ENCODE measurements at regions of chr4 and their contacts with region 1.

Region 1: GRCh38 chr4:80462621-80463091 is 127.1 kb downstream of the CFAP299 start:
- DNase-seq: peak in 5 of 9 donors; percentile 11 to 39 (median 21)
- ATAC-seq: no peak
- H3K4me3 ChIP-seq: peak overlapping the region; percentile 50
- H3K4me3 Mint-ChIP-seq: peak overlapping the region; percentile 22 to 88 (median 82)
- H3K27ac ChIP-seq: peak overlapping the region; percentile 29
- H3K27ac Mint-ChIP-seq: peak overlapping the region; percentile 65 to 93 (median 84)
- H3K4me1 ChIP-seq: peaks cover 0 to 12% of the 10 kb centered on the region in 2 donors
- H3K4me1 Mint-ChIP-seq: peaks cover 6 to 58% (median 40%) of the 10 kb centered on the region in 7 donors
- H3K27me3 ChIP-seq: no peaks in the 10 kb centered on the region
- H3K27me3 Mint-ChIP-seq: no peaks in the 10 kb centered on the region

Region 2: DNA sequence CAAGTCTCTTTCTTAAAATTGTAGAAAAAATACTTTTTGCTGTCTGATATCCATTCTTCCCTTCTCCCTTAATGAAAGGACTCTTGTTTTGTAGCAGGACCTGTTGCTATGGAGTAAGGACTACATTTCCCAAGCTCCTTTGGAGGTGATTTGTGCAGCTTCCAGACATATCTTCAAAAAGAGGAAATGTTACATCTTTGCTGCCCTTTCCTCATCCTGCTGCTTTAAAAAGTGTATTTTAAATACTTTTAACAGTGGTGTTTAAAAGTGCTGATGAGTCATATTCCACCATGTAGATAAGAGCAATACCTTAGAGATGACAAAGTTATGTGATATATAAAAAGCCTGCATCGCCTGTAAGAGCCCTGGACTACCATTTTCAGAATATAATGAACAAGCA is 28.4 kb before region 1 on chr4:
- CTCF ChIA-PET with region 1: interaction called, 3 read pairs
- POLR2A ChIA-PET with region 1: interaction called, 5 read pairs
- intact Hi-C with region 1: loop called in 1 of 2 experiments (anchors 2 kb)
- DNase-seq: no peak
- ATAC-seq: no peak
- H3K4me3 ChIP-seq: no peak overlapping the region
- H3K4me3 Mint-ChIP-seq: no peak overlapping the region
- H3K27ac ChIP-seq: no peak overlapping the region
- H3K27ac Mint-ChIP-seq: peak overlapping the region in 1 of 9 donors; percentile 34
- H3K4me1 ChIP-seq: peaks cover 3 to 13% of the 10 kb centered on the region in 2 donors
- H3K4me1 Mint-ChIP-seq: peaks cover 3 to 42% (median 31%) of the 10 kb centered on the region in 7 donors
- H3K27me3 ChIP-seq: no peaks in the 10 kb centered on the region
- H3K27me3 Mint-ChIP-seq: peaks cover 0 to 2% (median 0%) of the 10 kb centered on the region in 5 donors

Region 3: GRCh38 chr4:80492761-80493160 is 30.1 kb after region 1 on chr4:
- CTCF ChIA-PET with region 1: interaction called, 3 read pairs
- POLR2A ChIA-PET with region 1: interaction called, 3 read pairs
- intact Hi-C with region 1: loop called in 1 of 2 experiments (anchors 1 kb)
- DNase-seq: peak in 7 of 9 donors; percentile 61 to 89 (median 83)
- ATAC-seq: peak; percentile 98
- H3K4me3 ChIP-seq: no peak overlapping the region
- H3K4me3 Mint-ChIP-seq: peak overlapping the region; percentile 53 to 87 (median 67)
- H3K27ac ChIP-seq: peak overlapping the region; percentile 25
- H3K27ac Mint-ChIP-seq: peak overlapping the region; percentile 92 to 99 (median 97)
- H3K4me1 ChIP-seq: peaks cover 36 to 43% of the 10 kb centered on the region in 2 donors
- H3K4me1 Mint-ChIP-seq: peaks cover 28 to 74% (median 69%) of the 10 kb centered on the region in 7 donors
- H3K27me3 ChIP-seq: no peaks in the 10 kb centered on the region
- H3K27me3 Mint-ChIP-seq: no peaks in the 10 kb centered on the region

Region 4: GRCh38 chr4:80610845-80611677 is 148.4 kb after region 1 on chr4:
- CTCF ChIA-PET with region 1: no interaction called
- POLR2A ChIA-PET with region 1: no interaction called
- intact Hi-C with region 1: loop called in 1 of 2 experiments (anchors 5 kb)
- DNase-seq: no peak
- ATAC-seq: no peak
- H3K4me3 ChIP-seq: no peak overlapping the region
- H3K4me3 Mint-ChIP-seq: no peak overlapping the region
- H3K27ac ChIP-seq: no peak overlapping the region
- H3K27ac Mint-ChIP-seq: no peak overlapping the region
- H3K4me1 ChIP-seq: no peaks in the 10 kb centered on the region
- H3K4me1 Mint-ChIP-seq: peaks cover 0 to 27% (median 14%) of the 10 kb centered on the region in 7 donors
- H3K27me3 ChIP-seq: no peaks in the 10 kb centered on the region
- H3K27me3 Mint-ChIP-seq: peaks cover 0 to 5% (median 0%) of the 10 kb centered on the region in 5 donors

Region 5: DNA sequence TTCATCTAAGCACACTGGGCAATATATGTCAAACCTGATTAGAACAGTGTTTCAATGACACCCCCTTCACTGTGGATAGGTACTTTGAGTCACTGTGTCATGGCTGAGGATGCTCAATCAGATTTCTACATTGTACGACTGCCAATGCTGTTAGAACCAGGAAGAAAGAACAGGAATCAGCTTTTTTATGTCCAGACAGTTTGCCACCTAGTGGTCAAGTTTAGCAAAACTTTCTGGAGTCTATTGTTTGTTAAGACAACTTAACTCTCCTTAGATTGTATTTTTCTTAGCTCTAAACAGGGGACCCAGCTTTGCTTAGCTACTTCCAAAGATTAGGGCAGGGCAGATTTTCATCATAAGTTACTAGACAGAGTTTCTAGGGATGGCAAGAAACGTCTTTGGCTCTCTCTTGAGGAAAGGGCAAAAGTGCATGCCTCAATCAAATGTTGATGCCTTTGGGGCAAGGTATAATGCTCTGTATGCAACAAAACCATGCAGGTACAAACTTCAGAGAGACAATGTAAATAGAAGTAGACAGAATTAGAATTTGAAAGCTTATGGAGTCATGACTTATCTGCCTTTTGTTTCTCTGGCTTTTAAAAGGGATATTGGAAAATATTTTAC is 527.4 kb after region 1 on chr4:
- CTCF ChIA-PET with region 1: interaction called, 13 read pairs
- POLR2A ChIA-PET with region 1: no interaction called
- intact Hi-C with region 1: loop called in 1 of 2 experiments (anchors 1 kb)
- DNase-seq: peak in 7 of 9 donors; percentile 11 to 61 (median 58)
- ATAC-seq: peak; percentile 51
- H3K4me3 ChIP-seq: no peak overlapping the region
- H3K4me3 Mint-ChIP-seq: peak overlapping the region in 1 of 10 donors; percentile 30
- H3K27ac ChIP-seq: no peak overlapping the region
- H3K27ac Mint-ChIP-seq: no peak overlapping the region
- H3K4me1 ChIP-seq: no peaks in the 10 kb centered on the region
- H3K4me1 Mint-ChIP-seq: peaks cover 0 to 6% (median 0%) of the 10 kb centered on the region in 7 donors
- H3K27me3 ChIP-seq: no peaks in the 10 kb centered on the region
- H3K27me3 Mint-ChIP-seq: peaks cover 0 to 10% (median 4%) of the 10 kb centered on the region in 5 donors

Region 6: GRCh38 chr4:81136161-81136905 is 673.7 kb after region 1 on chr4:
- CTCF ChIA-PET with region 1: no interaction called
- POLR2A ChIA-PET with region 1: no interaction called
- intact Hi-C with region 1: no loop called
- DNase-seq: no peak
- ATAC-seq: no peak
- H3K4me3 ChIP-seq: no peak overlapping the region
- H3K4me3 Mint-ChIP-seq: no peak overlapping the region
- H3K27ac ChIP-seq: no peak overlapping the region
- H3K27ac Mint-ChIP-seq: no peak overlapping the region
- H3K4me1 ChIP-seq: no peaks in the 10 kb centered on the region
- H3K4me1 Mint-ChIP-seq: no peaks in the 10 kb centered on the region
- H3K27me3 ChIP-seq: no peaks in the 10 kb centered on the region
- H3K27me3 Mint-ChIP-seq: peaks cover 0 to 29% (median 4%) of the 10 kb centered on the region in 5 donors